ENCODE measurements at regions of chr1 and their contacts with region 1.

Region 1: DNA sequence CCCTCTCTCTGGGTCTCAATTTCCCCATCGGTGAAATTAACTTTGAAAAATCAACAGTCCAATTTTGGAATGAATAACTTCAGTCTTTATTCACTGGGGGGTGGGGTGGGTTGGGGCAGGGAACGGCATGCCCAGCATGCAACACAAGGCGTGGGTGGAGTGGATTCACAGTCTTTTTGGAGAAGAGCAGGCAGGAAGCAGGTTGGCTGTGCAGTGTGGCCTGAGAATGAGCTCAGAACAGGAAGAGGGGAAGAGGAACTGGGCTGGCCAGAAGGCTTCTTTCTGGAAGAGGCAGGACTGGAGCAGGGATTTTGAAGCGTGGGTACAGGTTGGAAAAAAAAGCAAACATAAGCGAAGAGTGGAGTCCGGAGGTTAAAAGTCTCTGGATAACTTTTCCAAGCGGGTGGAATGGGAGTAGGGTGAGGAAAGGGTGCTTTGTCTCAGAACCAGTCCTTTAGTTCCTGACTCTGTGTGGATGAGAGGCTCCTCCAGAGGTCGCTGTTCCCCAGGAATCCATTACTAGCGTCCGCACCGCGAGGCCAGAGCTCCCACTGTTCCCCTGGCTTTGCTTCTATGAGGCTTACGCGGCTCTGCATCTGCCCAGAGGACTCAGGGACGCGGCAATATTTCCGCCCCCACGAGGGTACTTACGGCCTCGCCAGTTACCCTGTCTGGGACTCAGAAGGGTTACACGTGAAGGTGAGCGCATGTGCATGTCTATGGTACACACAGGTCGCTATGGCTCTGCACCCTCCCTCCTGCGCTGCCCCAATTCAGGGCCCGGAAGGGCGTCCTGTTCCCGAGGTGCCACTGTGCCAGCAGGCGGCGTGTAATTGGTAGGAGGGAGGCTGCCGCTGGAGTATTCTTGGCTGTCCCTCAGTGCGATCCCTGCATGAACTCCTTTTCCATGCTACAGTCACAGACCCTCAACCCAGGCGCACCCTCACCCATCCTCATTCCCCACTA is 5.5 kb upstream of the FOXD2 start:
- DNase-seq: peak; percentile 80 to 96
- H3K4me3 ChIP-seq: no peak overlapping the region
- CTCF ChIP-seq: peak in 1 of 3 donors; percentile 78
- POLR2A ChIP-seq: no peak

Region 2: DNA sequence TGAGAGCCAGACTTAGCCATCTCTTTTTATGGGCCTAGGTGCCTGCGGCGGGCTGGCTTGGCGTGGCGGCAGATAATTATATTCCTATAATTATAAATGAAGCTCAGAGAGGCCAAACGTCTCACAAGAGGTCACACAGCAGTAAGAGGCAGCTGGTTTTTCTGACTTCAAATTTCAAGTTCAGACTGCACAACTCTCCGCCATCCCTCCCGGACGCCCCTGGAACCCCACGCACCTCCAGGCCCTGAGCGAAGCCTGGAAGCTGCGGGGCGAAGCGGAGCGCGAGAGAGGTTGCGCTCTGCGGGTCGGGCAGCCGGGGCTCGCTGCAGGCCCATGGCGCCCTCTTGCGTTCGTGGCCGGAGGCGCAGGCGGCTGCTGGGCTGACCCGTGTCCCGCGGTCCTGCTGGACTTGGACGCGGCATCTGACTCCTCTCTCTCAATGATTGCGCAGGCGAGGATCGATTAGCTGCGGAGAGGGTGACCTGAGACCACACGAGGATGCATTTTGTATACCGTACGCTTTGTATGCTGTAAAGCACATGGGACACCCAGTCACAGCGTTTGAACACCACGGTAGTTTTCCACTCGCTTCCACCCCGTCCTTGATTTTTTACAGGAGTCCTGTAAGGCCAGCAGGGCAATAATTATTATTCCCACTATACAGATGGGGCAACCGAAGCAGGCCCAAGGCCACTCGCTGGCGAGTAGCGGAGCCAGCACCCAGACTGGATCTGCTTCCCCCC is 278.1 kb after region 1 on chr1:
- intact Hi-C with region 1: loop called (anchors 5 kb)
- DNase-seq: peak; percentile 51 to 94
- H3K4me3 ChIP-seq: no peak overlapping the region
- CTCF ChIP-seq: peak in 2 of 3 donors; percentile 37 to 45
- POLR2A ChIP-seq: no peak

Region 3: DNA sequence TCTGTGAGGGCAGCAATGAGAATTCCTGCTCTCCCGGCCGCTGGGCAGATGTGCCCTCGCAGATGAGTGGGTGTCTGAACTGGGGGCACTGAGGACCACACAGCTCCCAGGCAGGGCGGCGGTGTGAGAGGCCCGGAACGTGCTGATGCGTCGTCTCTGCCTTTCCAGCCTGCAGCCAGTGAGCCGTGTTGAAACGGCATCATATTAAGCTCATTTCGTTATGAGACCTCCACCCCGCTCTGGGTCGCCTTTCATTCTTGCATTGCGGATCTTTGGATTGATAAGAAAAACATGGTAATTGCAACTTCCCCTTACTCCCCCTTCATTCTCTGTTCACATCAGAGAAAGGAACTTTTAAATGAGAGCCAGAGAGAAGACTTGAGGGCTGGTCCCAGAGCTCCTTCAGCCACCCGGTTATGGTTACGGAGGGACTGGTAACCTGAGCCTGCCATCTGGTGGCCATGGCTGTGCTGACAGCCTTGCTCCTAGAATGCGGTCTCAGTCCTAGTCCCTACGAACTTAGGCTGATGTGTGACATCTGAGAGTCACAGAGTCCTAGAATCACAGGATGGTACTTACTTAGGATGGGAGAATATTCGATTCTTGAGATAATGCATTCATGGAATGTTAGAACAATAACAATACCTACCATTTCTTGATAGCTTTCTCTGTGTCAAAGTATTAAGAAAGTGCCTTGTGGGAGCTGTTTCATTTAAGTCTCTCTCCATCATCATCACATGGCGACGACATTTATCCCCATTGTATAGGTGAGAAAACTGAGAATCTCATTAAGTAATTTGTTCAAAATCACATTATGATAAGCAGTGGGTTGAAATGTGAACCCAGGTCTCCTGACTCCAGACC is 293.9 kb after region 1 on chr1:
- intact Hi-C with region 1: loop called (anchors 5 kb)
- DNase-seq: peak; percentile 72 to 92
- H3K4me3 ChIP-seq: no peak overlapping the region
- CTCF ChIP-seq: no peak
- POLR2A ChIP-seq: no peak

Measured in lower leg skin (tissue), 4 donors.